ENCODE measurements at regions of chr15 and their contacts with region 1.

Region 1: DNA sequence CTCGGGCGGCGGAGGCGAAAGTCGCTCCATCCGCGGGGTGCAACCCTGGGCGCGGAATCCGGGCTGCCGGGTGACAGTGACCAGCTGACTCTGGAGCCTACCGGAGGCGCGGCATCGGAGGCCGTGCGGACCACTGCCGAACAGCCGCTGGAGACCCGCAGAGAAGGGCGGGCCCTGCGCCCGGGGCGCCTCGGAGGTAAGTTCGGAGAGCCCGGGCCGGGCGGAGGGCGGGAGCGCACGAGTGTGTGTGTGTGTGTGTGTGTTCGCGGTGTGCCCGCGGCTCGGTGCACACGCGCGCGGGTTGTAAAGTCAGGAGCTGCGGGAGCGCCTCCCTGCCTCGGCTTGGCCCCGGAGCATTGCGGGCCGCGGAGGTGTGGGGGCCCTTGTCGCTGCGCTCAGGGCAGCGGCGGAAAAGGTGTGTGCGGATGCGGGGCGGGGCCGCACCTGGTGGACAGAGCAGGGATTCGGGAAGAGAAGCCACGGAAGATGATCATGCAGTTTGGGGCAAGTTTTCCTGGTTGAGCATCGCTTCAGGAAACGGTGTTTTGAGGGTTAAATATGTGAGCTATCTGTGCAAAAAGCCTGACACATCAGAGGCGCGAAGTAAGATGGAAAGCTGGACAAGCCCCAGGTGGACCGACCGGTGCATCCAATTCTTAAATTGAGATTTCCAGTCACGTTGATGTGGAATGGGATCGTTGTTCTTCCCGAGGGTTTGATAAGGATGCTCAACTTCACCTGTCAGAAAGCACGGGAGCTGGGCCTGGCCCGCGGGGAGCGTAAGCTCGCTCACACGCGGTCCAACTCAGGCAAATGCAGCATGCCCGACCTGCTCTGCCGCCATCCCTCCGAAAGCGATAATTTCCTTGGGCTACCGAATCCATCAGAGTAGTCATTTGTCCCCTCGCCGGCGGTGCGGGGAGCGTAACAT is 474 bp downstream of the MINAR1 start:
- DNase-seq: no peak
- H3K4me3 ChIP-seq: no peak overlapping the region
- H3K27ac ChIP-seq: no peak overlapping the region
- H3K4me1 ChIP-seq: no peaks in the 10 kb centered on the region
- H3K27me3 ChIP-seq: no peaks in the 10 kb centered on the region
- CTCF ChIP-seq: no peak

Region 2: DNA sequence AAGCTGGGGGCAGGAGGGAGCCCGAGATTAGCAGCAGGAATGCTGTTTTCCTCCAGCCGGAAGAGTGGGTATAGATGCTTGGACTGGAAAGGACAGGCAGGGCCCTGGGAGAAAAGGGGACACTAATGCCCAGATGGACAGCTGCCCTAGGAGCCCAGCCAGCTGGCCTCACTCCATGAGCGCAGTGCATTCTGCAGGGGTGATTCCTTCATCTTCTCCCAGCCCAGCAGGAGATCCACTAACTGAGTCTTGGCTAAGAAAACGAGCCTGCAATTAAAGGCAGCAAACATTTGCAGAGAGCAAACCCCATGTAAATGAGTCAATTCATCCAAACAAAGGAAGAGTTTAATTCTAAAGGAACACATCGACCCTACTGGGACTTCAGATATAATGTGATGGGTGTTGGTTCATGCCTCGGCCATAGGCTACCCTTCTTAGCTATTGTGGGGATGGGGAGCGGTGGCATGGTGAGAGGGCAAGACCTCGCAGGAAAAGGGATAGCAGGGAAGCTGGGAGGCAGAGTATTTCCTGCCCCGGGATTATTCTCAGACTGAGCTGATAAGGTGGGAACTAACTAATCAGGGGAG is 13.8 kb before region 1 on chr15:
- CTCF ChIA-PET with region 1: no interaction called
- POLR2A ChIA-PET with region 1: no interaction called
- intact Hi-C with region 1: no loop called
- DNase-seq: no peak
- H3K4me3 ChIP-seq: no peak overlapping the region
- H3K27ac ChIP-seq: no peak overlapping the region
- H3K4me1 ChIP-seq: no peaks in the 10 kb centered on the region
- H3K27me3 ChIP-seq: no peaks in the 10 kb centered on the region
- CTCF ChIP-seq: no peak

Region 3: GRCh38 chr15:79540558-79540957 is 107.9 kb after region 1 on chr15:
- CTCF ChIA-PET with region 1: no interaction called
- POLR2A ChIA-PET with region 1: interaction called, 12 read pairs
- intact Hi-C with region 1: no loop called
- DNase-seq: no peak
- H3K4me3 ChIP-seq: no peak overlapping the region
- H3K27ac ChIP-seq: no peak overlapping the region
- H3K4me1 ChIP-seq: no peaks in the 10 kb centered on the region
- H3K27me3 ChIP-seq: peaks cover 34% of the 10 kb centered on the region
- CTCF ChIP-seq: no peak; the same call in 1 of the 2 replicates

Measured in PC-9 (cell line).